BJ (cell line): ENCODE measurements at regions of chr2 and their contacts with region 1.

Region 1: DNA sequence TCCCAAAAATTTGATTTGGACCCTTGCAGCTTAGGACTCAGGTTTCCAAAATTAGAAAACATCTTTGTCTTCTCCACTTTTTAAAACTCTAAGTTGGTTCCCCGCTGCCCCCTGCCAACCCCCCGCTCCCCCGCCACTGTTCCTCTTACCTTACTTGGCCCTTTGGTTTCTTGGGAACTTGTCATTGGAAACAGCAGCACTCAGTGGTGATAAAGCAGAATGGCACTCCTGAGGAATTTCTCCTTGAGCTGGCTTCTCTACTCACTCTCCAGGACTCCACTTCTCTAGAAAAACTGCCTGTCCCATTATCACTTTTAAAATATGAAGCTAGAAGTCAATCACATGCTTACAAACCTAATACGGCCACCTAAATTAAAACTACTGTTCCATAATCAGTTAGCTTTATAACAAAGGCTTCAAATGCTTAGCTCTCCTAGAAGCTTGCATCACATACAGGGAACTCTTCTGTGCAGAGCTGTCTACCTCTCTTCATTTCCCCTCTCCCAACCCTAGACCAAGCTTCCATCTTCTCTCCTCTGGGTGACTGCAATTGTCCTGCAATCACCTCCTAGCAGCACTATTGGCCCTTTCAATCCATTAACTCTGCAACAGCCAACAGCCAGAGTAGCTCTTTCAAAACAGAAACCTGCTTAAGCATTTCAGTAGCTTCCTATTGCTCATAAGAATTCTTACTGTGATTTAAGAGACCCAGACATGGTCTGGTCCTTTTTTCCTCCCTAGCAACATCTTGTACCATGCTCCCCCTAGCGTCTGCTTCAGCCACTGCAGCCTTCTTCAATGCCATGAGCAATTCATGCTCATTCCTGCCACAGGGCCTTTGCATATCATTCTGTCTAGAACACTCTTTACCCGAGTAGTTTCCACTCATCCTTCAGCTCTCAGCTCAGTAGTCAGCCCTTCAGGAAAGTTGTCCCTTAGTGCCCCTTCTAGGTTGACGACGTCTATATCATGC is 15.2 kb upstream of the PLEKHM3 start:
- DNase-seq: no peak
- H3K4me3 ChIP-seq: no peak overlapping the region
- H3K27me3 ChIP-seq: no peaks in the 10 kb centered on the region
- CTCF ChIP-seq: peak; percentile 82

Region 2: DNA sequence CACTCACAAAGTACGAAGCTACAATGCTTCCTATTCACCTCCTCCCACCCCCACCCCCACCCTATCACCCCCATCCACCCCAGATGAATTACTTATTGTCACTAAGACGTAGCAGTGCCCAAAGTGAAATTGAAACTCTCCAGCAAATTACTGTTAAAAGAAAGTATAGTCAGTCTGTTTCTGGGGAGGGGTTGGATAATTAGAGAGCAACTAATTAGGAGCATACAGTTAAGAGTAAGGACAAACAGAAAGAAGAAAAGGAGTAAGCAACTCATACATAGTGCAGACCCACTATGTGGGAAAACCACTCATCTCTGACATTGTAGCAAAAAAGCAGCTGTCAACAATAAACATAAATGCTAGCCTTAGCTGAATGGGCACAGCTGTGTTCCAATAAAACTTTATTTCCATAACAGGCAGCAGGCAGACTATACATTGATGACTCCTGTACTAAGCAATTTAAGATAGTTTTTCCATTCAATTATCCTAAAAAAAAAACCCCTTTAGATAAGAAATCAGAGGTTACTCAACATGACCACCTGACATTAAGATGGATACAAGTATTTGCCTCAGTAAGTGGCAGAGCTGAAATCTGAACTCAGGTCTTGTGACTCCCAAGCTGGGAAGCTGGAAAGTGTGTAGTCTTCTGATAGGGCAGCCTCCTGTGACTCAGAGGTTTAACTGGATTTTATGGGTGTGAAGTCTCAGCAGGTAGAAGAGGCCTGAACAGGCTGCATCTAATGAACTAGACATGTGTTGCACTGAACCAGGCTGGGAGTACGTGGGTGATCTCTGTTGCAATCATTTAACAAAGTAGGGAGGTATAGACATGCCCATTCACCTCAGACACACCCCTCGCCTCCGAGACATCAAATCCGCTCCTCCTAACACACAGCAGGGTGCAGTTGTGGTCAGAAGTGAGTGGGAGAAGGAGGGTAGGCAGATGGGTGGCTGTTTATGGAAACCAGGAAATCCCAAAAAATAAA is 703.0 kb before region 1 on chr2:
- CTCF ChIA-PET with region 1: no interaction called
- POLR2A ChIA-PET with region 1: no interaction called
- DNase-seq: no peak
- H3K4me3 ChIP-seq: no peak overlapping the region
- H3K27me3 ChIP-seq: no peaks in the 10 kb centered on the region
- CTCF ChIP-seq: no peak

Region 3: GRCh38 chr2:207725873-207726578 is 314.5 kb before region 1 on chr2:
- CTCF ChIA-PET with region 1: interaction called, 11 read pairs
- POLR2A ChIA-PET with region 1: no interaction called
- DNase-seq: no peak
- H3K4me3 ChIP-seq: no peak overlapping the region
- H3K27me3 ChIP-seq: no peaks in the 10 kb centered on the region
- CTCF ChIP-seq: no peak

Region 4: DNA sequence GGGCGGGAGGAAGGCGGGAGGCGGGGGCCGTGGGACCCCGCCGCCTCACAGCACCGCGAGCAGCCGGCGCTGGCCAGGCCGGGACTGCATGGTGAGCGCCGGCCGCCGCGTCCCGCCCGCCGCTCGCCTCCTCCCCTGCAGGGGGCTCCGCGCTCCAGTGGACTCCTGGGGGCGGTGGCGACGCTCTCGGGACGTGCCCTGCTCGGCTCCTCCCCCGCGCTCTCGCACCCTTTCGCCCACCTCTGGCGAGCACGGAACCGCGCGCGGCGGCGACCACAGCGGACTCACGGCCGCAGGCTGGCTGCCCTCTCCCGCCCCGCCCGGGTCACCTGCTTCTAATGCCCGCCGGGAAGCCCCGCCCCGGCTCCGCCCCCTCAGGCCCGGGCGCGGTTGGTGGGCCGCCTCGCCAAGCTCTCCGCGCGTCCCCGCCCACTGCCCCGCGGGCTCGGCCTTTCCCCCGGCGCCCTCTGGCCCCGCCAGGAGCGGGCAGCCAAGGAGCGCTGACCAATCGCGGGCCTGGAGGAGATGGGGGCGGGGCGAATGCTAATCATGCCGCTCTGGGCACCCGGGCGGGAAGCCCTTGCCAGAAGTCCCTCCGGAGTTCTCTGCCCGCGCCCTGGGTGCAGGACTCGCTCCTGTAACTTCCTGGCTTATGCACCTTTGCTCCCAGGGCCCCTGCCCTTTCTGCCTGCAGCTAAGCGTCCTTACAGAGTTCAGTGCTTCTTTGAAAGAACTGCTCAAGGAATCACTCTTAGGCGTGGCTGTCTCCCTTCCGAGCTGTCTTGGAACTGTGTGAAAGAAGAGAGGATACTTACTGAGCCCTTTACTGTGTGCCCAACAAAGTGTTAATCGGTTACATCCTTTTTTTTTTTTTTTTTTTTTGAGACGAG is 270.6 kb before region 1 on chr2 and contains the start of gene FZD5:
- CTCF ChIA-PET with region 1: interaction called, 13 read pairs
- POLR2A ChIA-PET with region 1: interaction called, 3 read pairs
- DNase-seq: peak; percentile 12
- H3K4me3 ChIP-seq: peak within 1 kb of the TSS; percentile 65
- H3K27me3 ChIP-seq: peaks cover 1% of the 10 kb centered on the region; the same call in 1 of the 2 replicates
- CTCF ChIP-seq: peak; percentile 38
- polyA plus RNA-seq, gene FZD5: 0.29 and 0.31 TPM in 2 replicates

Region 5: GRCh38 chr2:208025037-208025813 is 15.3 kb before region 1 on chr2 and contains the start of gene PLEKHM3:
- CTCF ChIA-PET with region 1: interaction called, 31 read pairs
- POLR2A ChIA-PET with region 1: no interaction called
- DNase-seq: no peak
- H3K4me3 ChIP-seq: peak within 1 kb of the TSS; percentile 85
- H3K27me3 ChIP-seq: no peaks in the 10 kb centered on the region
- CTCF ChIP-seq: no peak
- polyA plus RNA-seq, gene PLEKHM3: 5.0 and 5.8 TPM in 2 replicates

Region 6: DNA sequence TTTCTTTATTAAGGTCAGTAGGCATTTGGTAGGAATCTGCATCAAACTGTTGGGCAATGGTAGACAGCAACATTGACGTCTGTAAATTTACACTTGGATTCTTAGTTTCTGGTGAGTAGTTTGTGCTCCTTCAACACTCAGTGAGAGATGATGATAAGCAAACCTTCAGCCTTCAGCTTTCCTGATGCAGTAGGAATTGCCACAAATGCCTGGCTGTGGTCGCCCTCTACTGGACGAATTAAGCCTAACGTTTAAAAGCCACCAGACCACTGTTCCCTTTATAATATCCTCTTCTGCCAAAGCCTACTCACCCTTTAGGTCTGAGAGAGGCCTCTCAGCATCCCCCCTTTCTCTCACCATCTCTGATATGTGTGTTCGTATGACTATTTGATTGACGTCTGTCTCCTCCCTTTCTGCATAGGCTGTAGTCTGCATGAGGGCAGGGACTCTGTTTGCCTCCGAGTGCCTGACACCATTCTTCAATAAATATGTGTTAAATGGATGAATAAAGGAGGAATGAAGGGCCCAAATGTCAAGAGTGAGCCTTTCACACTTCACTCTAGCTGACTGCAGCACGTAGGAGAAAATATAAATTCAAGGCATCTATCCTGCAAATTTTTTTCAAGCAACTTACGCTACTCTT is 31.9 kb after region 1 on chr2:
- CTCF ChIA-PET with region 1: interaction called, 18 read pairs
- POLR2A ChIA-PET with region 1: no interaction called
- DNase-seq: no peak
- H3K4me3 ChIP-seq: no peak overlapping the region
- H3K27me3 ChIP-seq: no peaks in the 10 kb centered on the region; the same call in 1 of the 2 replicates
- CTCF ChIP-seq: peak; percentile 79